ENCODE measurements at regions of chr1 and their contacts with region 1.

Region 1: GRCh38 chr1:2406451-2407041 is 5.8 kb downstream of the PEX10 start:
- H3K4me3 ChIP-seq: no peak overlapping the region
- H3K27ac ChIP-seq: no peak overlapping the region
- H3K4me1 ChIP-seq: no peaks in the 10 kb centered on the region
- CTCF ChIP-seq: peak; percentile 56; the same call in 1 of the 2 replicates

Region 2: DNA sequence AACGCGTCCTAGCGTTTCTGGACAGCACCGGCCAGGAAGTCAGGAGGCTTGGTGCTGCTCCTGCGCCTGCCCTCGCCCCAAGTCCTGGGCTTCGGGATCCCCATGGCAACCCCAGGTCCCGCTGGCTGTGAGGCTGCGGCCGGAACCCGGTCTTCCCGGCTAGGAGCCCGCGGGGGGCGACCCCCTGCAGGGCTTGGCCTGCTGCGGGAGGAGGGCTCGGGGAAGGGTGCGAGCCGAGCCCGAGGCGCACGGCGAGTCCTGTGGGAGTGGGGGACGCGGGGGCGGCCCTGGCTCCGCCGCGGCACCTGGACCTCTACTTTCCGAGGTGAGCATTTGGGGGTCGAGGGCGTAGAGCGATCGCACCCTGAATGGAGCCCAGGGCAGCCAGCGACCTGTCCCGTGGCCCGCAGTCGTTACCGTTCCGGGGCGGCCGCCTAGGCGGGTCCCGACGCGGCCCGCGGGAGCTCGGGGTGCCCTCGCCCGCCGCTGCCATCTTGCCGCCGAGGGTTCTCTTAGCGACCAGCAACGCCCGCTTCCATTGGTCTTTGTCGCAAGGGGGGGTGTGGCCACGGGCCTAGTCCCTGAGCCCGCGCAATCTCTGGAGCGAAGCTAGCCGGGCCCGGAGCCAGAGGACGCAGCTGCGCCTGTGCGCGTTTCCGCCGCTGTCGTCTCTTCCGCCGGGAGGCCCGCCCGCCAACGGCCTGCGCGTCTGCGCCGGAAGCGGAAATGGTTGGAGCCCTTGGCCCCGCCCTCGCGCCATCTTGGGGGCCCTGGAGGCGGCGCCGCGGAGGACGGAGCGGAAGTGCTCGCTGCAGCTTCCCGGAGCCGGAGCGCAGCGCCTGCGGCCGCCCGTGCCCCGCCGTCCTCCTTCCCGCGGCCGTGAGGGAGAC is 15.3 kb before region 1 on chr1 and contains the starts of genes MORN1 and RER1:
- CTCF ChIA-PET with region 1: no interaction called
- POLR2A ChIA-PET with region 1: interaction called, 24 read pairs
- H3K4me3 ChIP-seq: peak within 1 kb of the TSS; percentile 93
- H3K27ac ChIP-seq: peak within 1 kb of the TSS; percentile 75
- H3K4me1 ChIP-seq: peaks cover 3% of the 10 kb centered on the region; the same call in 1 of the 2 replicates
- CTCF ChIP-seq: no peak